ENCODE measurements at regions of chr2 and their contacts with region 1.

Region 1: GRCh38 chr2:98518090-98518489 is 73.4 kb downstream of the INPP4A start:
- DNase-seq: peak; percentile 71
- ATAC-seq: peak; percentile 76
- H3K4me3 Mint-ChIP-seq: no peak overlapping the region
- H3K27ac Mint-ChIP-seq: no peak overlapping the region
- H3K4me1 Mint-ChIP-seq: peaks cover 58% of the 10 kb centered on the region
- H3K27me3 Mint-ChIP-seq: no peaks in the 10 kb centered on the region
- CTCF ChIP-seq: peak; percentile 77

Region 2: DNA sequence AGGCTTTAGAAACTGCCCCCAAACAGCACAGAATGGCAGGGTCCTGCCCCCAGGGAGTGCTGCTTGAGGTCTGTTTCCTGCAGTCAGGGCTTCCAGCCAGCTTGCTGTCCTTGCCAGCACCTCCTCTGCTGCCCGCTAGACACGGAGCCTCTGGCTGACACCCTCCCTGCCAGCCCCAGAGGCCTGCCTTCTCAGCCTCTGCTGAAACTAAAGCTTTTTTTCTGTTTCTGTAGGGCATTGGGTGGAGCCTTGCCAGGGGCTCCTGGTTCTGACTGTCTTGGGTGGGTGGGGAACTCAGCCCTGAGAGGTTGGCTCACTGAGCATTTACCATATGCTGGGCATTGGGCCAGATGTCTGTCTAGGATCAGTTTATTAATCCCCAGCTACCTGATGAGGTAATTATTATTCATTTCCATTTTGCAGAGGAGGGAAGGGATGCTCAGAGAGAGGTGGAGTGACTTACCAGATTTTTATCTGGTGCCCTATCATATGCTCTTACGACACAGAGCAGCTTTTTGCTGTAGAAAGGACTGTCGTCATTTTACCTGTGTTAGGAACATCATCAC is 38.0 kb before region 1 on chr2:
- CTCF ChIA-PET with region 1: no interaction called
- POLR2A ChIA-PET with region 1: interaction called, 5 read pairs
- intact Hi-C with region 1: loop called (anchors 5 kb)
- DNase-seq: peak; percentile 76
- ATAC-seq: peak; percentile 72
- H3K4me3 Mint-ChIP-seq: peak overlapping the region; percentile 30
- H3K27ac Mint-ChIP-seq: peak overlapping the region; percentile 91
- H3K4me1 Mint-ChIP-seq: peaks cover 98% of the 10 kb centered on the region
- H3K27me3 Mint-ChIP-seq: no peaks in the 10 kb centered on the region
- CTCF ChIP-seq: no peak

Region 3: DNA sequence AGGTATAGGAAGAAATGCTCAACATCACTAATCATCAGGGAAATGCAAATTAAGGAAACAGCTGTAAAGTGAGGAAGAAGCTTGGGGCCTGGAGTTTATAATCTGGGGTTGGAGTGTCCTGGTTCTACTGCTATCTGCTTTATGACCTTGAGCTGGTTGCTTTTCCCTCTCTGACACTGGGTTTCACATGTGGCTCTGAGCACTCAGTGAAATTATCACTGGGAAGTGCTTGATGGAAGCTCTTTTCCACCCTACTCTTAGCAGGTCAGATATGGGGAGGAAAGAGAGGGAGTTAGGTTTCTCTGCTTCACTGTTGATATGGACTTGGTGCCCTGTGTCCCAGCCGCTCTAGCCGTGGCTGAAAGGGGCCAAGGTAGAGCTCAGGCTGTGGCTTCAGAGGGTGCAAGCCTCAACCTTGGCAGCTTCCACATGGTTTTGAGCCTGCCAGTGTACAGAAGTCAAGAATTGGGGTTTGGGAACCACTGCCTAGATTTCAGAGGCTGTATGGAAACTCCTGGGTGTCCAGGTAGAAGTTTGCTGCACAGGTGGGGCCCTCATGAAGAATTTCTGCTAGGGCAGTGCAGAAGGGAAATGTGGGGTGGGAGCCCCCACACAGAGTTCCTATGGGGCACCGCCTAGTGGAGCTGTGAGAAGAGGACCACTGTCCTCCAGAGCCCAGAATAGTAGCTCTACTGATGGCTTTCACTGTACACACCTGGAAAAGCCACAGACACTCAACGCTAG is 21.2 kb before region 1 on chr2:
- CTCF ChIA-PET with region 1: no interaction called
- POLR2A ChIA-PET with region 1: no interaction called
- intact Hi-C with region 1: no loop called
- DNase-seq: no peak
- ATAC-seq: no peak
- H3K4me3 Mint-ChIP-seq: no peak overlapping the region
- H3K27ac Mint-ChIP-seq: no peak overlapping the region
- H3K4me1 Mint-ChIP-seq: peaks cover 48% of the 10 kb centered on the region
- H3K27me3 Mint-ChIP-seq: no peaks in the 10 kb centered on the region
- CTCF ChIP-seq: no peak

Region 4: DNA sequence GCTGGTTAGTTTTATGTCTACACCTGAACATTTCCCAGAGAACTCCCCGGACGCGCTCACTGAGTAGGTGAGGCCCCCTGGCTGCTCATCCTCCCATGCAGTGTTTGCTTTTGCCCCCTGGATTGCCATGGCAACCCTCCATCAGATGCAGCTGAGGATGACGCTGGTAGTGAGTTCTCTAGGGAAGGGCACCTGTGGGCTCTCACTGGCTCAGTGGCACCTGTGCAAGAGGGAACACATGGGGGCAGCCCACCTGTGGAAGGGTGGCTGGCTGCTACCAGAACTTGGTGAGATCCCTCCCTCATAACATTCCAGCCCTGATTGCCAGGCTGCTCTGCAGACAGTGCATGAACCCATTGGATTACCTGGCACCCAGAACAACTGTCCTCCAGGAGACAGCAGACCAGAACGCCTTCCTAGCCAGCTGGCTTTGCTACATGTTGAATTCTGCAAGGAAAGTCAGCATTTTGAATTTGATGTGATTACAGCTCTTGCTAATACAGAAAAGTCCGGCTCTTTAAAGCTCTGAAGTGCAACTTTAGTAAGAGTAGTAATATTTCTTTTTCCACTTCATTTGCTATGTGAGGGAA is 68.6 kb after region 1 on chr2:
- CTCF ChIA-PET with region 1: no interaction called
- POLR2A ChIA-PET with region 1: no interaction called
- intact Hi-C with region 1: no loop called
- DNase-seq: no peak
- ATAC-seq: no peak
- H3K4me3 Mint-ChIP-seq: no peak overlapping the region
- H3K27ac Mint-ChIP-seq: peak overlapping the region; percentile 25
- H3K4me1 Mint-ChIP-seq: peaks cover 8% of the 10 kb centered on the region
- H3K27me3 Mint-ChIP-seq: no peaks in the 10 kb centered on the region
- CTCF ChIP-seq: no peak

Measured in activated CD8-positive, alpha-beta T cell treated with anti-CD3 and anti-CD28 coated beads for 36 hours (primary cell).